ENCODE measurements at regions of chr3 and their contacts with region 1.

Region 1: GRCh38 chr3:129490242-129491045 is 38.0 kb upstream of the RHO start:
- DNase-seq: peak; percentile 82 to 83 (median 83)
- ATAC-seq: peak; percentile 91 to 94 (median 93)
- H3K4me3 ChIP-seq: no peak overlapping the region
- H3K27ac ChIP-seq: peak overlapping the region; percentile 42 to 67 (median 54)
- H3K4me1 ChIP-seq: peaks cover 0 to 22% (median 4%) of the 10 kb centered on the region in 4 donors
- H3K27me3 ChIP-seq: no peaks in the 10 kb centered on the region
- CTCF ChIP-seq: peak; percentile 89 to 93 (median 91)
- POLR2A ChIP-seq: no peak

Region 2: GRCh38 chr3:129611812-129612533 is 121.5 kb after region 1 on chr3:
- intact Hi-C with region 1: loop called (anchors 10 kb)
- DNase-seq: peak in 1 of 3 donors; percentile 45
- ATAC-seq: peak in 3 of 4 donors; percentile 5 to 13 (median 8)
- H3K4me3 ChIP-seq: no peak overlapping the region
- H3K27ac ChIP-seq: peak overlapping the region in 1 of 3 donors; percentile 21
- H3K4me1 ChIP-seq: peaks cover 0 to 7% (median 0%) of the 10 kb centered on the region in 4 donors
- H3K27me3 ChIP-seq: no peaks in the 10 kb centered on the region
- CTCF ChIP-seq: no peak
- POLR2A ChIP-seq: no peak

Region 3: GRCh38 chr3:130014526-130014925 is 524.1 kb after region 1 on chr3:
- intact Hi-C with region 1: no loop called
- DNase-seq: no peak
- ATAC-seq: no peak
- H3K4me3 ChIP-seq: no peak overlapping the region
- H3K27ac ChIP-seq: no peak overlapping the region
- H3K4me1 ChIP-seq: no peaks in the 10 kb centered on the region
- H3K27me3 ChIP-seq: no peaks in the 10 kb centered on the region
- CTCF ChIP-seq: no peak
- POLR2A ChIP-seq: no peak

Measured in right lobe of liver (tissue), 6 donors.